Activated T-helper 2 cell treated with anti-CD3 and anti-CD28 coated beads, Interferon-gamma antibody, Interleukin-2, Interleukin-4, amounts not matched to agents 10 μg/mL and 5 μg/mL and 100 μg/mL, durations not matched to agents 14 hours and 24 hours and 36 hours (primary cell): ENCODE measurements at regions of chr16 and their contacts with region 1.

Region 1: DNA sequence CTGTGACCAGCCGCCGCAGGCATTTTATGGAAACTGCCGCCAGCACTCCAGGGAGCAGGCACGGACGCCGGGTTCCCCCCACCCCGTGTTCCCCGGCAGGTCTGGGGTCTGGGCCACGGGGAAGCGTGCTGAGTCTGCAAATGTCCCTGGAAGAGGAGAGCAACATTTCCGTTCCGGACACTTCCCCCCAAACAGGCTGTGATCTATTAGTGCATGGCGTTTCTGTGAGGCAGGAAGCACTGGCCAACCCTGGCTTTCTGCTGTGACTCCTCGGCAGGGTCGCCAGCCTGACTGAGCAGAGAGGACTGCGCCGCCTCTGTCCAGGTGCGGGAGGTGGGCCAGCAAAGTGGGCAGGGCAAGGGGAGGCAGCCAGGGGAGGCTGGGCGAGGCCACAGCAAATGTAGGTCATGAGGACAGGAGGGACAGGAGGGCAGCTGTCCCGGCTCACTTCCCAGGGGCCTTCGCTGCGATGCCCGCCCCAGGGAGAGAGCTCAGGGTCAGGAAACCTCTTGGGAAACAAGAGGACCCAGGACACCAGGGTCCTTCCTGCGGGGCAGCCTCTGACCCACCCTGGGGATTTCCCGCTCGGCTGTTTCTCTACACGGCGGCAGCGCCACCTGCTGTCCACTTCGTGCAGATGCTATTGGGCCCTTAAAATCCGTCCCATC is 9.5 kb downstream of the FOXF1 start:
- DNase-seq: peak; percentile 39
- H3K4me3 Mint-ChIP-seq: no peak overlapping the region
- H3K27ac Mint-ChIP-seq: no peak overlapping the region
- H3K4me1 Mint-ChIP-seq: no peaks in the 10 kb centered on the region
- H3K27me3 Mint-ChIP-seq: peaks cover 38% of the 10 kb centered on the region

Region 2: DNA sequence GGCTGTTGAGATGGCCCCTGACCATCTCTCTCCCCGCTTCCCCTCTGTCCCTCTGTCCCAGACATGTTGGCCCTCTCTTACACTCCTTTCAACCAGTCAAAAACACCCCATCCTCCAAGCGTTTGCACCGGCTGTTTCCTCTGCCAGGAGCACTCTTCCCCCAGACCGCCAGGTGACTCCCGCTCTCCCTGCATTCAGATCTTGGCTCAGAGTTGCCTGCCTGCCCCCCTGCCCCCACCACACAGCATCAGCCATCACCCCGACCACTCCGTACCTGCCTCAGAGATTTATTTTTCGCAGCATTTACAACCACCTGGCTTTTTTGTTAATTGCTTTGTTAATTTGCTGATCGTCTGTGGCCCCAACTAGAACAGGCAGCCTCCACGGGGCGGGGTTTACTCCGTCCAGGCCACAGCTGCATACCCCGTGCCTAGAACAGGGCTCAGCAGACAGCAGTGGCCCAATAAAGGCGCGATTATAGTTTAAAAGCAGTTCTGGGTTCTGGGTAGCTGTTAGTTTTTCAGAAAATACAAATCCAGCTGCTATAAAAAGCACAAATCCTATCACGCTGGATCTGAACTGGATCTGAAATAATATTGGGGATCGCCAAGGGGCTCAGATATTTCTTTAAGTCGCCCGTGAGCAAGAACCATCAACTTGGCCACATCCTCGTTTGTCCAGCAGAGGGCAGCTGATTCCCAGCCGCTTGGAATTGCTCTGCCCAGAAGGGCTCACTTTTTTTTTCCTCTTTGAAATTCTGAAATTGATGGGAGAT is 447.3 kb before region 1 on chr16:
- intact Hi-C with region 1: loop called (anchors 10 kb)
- DNase-seq: no peak
- H3K4me3 Mint-ChIP-seq: no peak overlapping the region
- H3K27ac Mint-ChIP-seq: no peak overlapping the region
- H3K4me1 Mint-ChIP-seq: no peaks in the 10 kb centered on the region
- H3K27me3 Mint-ChIP-seq: peaks cover 3% of the 10 kb centered on the region

Region 3: DNA sequence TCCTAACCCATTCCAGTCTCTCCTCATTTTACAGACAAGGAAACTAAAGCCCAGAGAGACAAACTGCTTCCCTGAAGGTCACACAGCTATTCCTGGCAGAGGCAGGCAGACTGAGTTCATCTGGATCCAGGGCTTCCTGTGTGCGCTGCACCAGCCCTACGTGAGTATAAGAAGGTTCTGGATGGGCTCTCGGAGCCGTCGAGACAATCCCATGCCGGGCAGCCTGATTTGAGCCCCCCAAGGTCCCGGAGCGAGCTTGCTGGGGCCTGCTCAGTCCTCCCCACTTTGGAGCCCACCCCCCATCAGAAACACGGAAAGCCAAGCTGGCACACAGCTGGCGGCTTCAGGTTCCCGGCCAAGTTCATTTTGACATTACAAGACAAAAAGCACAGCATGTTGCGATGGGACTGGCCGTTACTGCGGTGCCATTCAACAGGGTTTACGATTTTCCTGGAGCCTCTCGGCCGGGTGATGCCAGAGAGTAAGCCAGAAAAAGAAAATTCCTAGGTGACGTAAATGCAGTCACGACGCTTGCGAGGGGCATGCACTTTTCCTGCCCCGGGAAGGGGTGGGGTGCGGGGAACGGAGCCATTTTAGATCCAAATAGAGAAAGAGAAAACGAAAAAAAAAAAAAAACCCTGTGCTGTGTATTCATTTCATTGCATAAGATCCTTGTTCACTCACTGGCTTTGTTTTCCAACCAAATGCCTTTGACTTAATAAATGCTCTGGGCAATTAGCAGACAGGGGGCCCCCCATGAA is 176.6 kb before region 1 on chr16:
- intact Hi-C with region 1: loop called (anchors 2 kb)
- DNase-seq: no peak
- H3K4me3 Mint-ChIP-seq: no peak overlapping the region
- H3K27ac Mint-ChIP-seq: no peak overlapping the region
- H3K4me1 Mint-ChIP-seq: no peaks in the 10 kb centered on the region
- H3K27me3 Mint-ChIP-seq: peaks cover 28% of the 10 kb centered on the region

Region 4: GRCh38 chr16:86479419-86479818 is 40.4 kb before region 1 on chr16:
- intact Hi-C with region 1: no loop called
- DNase-seq: no peak
- H3K4me3 Mint-ChIP-seq: no peak overlapping the region
- H3K27ac Mint-ChIP-seq: no peak overlapping the region
- H3K4me1 Mint-ChIP-seq: no peaks in the 10 kb centered on the region
- H3K27me3 Mint-ChIP-seq: peaks cover 12% of the 10 kb centered on the region